IMR-90 (cell line): ENCODE measurements at regions of chr1 and their contacts with region 1.

Region 1: DNA sequence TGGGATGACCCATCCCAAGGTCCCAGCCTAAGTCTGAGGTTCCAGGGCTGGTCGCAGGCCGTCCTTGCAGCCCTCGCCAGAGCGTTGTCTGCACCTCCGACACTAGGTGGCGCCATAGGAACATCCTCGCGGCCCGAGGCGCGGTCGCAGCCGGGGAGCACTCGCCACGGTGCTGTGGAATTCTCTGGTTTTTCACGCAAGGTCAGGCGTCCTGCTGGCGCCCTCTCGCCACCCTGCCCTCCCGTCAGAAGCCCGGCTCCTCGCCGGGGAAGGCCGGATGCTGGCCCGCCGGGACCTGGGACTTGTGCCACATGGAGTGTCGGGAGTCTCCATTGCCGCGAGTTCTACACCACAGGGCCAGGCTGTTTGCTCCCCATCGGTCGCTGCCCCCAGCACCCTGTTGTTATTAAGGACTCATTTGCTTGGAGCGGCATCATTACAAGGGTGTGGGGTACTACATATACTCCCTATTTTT is 196.8 kb upstream of the LMO4 start:
- DNase-seq: peak; percentile 64
- ATAC-seq: peak; percentile 96
- H3K4me3 ChIP-seq: peak overlapping the region; percentile 34
- H3K27ac ChIP-seq: peak overlapping the region; percentile 21; the same call in 1 of the 2 replicates
- H3K4me1 ChIP-seq: peaks cover 6% of the 10 kb centered on the region; the same call in 1 of the 2 replicates
- H3K27me3 ChIP-seq: peaks cover 2% of the 10 kb centered on the region; the same call in 1 of the 2 replicates
- CTCF ChIP-seq: peak; percentile 96
- POLR2A ChIP-seq: no peak
- RAD21 ChIP-seq: peak; percentile 97

Region 2: DNA sequence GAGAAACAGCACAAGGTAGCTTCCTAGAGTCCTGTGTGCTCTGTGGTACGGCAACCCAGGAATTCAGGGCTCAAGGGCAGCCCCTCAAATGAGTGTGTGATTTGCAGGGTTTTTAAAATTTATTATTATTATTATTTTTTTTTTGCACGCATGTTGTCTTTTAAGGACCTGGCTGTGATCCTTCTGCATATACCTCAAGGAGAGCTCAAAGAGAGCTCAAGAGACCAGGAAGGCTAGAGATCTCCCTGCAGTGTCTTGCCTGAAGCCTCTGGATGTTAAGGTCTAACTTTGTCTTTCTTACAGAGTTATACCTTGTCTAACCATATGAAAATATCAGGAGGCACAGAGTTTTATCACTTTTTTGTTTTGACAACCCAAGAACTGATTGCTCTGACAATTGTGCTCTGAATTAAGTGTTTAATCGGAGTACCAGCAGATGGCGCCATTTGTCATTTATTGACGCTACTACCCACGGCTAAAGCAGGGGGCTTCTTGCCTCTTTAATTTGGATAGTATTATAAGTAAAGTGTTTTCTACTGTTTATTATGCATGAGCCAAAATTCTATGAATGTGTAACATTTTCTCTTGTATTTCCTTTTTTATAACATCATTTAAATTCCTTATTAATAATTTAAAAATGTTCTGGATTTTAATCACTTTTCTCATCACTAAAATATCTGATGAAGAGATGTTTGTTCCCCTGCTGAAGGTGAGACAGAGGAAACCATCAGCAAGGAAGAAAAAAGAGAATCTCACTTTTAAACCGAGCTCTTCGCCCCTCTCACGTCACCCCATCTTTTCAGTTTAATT is 161.0 kb after region 1 on chr1:
- CTCF ChIA-PET with region 1: interaction called, 3 read pairs
- POLR2A ChIA-PET with region 1: no interaction called
- dilution Hi-C with region 1: no loop called
- in situ Hi-C with region 1: no loop called
- intact Hi-C with region 1: loop called (anchors 1 kb)
- DNase-seq: peak; percentile 65
- ATAC-seq: peak; percentile 68; the same call in 1 of the 2 replicates
- H3K4me3 ChIP-seq: no peak overlapping the region
- H3K27ac ChIP-seq: no peak overlapping the region
- H3K4me1 ChIP-seq: 0 out of 2 replicates have a peak, but pooled peaks cover 1% of the 10 kb centered on the region
- H3K27me3 ChIP-seq: peaks cover 2% of the 10 kb centered on the region
- CTCF ChIP-seq: peak; percentile 77
- POLR2A ChIP-seq: no peak
- RAD21 ChIP-seq: peak; percentile 77

Region 3: GRCh38 chr1:87953732-87954344 is 822.0 kb after region 1 on chr1:
- CTCF ChIA-PET with region 1: no interaction called
- POLR2A ChIA-PET with region 1: no interaction called
- dilution Hi-C with region 1: no loop called
- in situ Hi-C with region 1: no loop called
- intact Hi-C with region 1: loop called (anchors 2 kb)
- DNase-seq: peak; percentile 79
- ATAC-seq: peak; percentile 71
- H3K4me3 ChIP-seq: no peak overlapping the region
- H3K27ac ChIP-seq: no peak overlapping the region
- H3K4me1 ChIP-seq: peaks cover 2% of the 10 kb centered on the region; the same call in 1 of the 2 replicates
- H3K27me3 ChIP-seq: no peaks in the 10 kb centered on the region
- CTCF ChIP-seq: peak; percentile 82
- POLR2A ChIP-seq: no peak
- RAD21 ChIP-seq: peak; percentile 77

Region 4: DNA sequence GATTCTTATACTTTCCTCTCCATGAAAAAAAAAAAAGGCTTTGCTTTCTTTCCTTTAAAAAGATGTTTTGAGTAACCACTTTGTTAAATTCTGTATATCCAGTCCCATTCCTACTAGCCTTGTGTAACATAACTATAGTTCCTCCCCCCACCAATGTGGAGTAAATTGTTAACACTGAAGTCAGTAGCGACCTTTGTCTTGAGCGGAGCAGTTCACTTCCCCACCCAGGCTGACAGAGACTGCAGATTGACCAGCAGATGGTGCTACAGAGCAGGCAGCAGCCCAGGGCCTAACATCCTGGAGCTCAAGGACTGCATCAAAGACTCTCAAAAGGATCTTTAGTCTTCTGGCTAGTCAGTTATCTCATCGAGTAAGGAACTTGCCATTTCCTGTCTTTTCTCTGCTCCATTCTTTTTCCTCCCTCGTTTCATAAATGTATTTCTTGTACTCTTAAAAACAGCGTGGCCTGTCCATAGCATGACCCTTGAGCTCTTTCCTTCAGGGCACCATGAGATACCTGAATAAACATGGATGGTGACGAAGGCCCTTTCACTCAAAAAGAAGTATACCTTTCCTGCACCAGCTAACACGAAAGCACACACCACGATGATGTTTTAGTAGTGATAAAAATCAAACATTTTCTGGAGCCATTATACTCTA is 1048.7 kb after region 1 on chr1:
- CTCF ChIA-PET with region 1: no interaction called
- POLR2A ChIA-PET with region 1: no interaction called
- dilution Hi-C with region 1: no loop called
- in situ Hi-C with region 1: no loop called
- intact Hi-C with region 1: loop called (anchors 5 kb)
- DNase-seq: peak; percentile 79
- ATAC-seq: peak; percentile 100
- H3K4me3 ChIP-seq: no peak overlapping the region
- H3K27ac ChIP-seq: no peak overlapping the region
- H3K4me1 ChIP-seq: no peaks in the 10 kb centered on the region; the same call in 1 of the 2 replicates
- H3K27me3 ChIP-seq: no peaks in the 10 kb centered on the region
- CTCF ChIP-seq: peak; percentile 83
- POLR2A ChIP-seq: no peak
- RAD21 ChIP-seq: peak; percentile 76

Region 5: DNA sequence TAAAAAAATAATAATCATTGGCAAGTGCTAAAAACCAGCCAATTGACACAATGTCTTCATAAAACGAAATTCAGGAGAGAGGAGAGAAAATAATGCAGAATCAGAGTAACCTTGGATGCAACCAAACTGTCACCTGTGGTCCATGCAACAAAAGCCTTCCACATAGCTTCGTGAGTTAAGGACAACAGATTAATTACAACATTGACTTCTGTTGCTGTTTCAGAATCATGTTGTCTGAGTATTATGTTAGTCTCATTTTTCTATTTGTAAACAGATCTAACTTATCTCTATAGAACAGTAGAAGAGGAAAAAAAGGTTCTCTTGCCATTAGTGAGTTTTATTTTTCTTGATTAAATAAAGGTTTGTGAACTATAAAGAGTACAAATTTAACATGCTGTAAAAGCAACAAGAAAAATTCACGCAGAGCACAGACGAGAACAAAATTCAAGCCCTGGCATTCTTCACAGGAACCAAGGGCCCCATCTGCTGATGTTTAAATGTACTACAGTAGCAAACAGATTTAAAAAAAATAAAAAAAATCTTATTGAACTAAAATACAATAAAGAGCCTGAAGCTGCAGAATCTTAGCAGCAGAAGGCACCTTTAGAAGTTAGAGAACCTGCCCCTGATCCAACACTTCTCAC is 1171.1 kb after region 1 on chr1:
- CTCF ChIA-PET with region 1: no interaction called
- POLR2A ChIA-PET with region 1: no interaction called
- dilution Hi-C with region 1: no loop called
- in situ Hi-C with region 1: loop called (anchors 10 kb)
- intact Hi-C with region 1: loop called (anchors 1 kb)
- DNase-seq: peak; percentile 55
- ATAC-seq: peak; percentile 82
- H3K4me3 ChIP-seq: no peak overlapping the region
- H3K27ac ChIP-seq: no peak overlapping the region
- H3K4me1 ChIP-seq: no peaks in the 10 kb centered on the region
- H3K27me3 ChIP-seq: no peaks in the 10 kb centered on the region
- CTCF ChIP-seq: peak; percentile 65
- POLR2A ChIP-seq: no peak
- RAD21 ChIP-seq: peak; percentile 72